HAP-1 (cell line): ENCODE measurements at regions of chr12 and their contacts with region 1.

Region 1: DNA sequence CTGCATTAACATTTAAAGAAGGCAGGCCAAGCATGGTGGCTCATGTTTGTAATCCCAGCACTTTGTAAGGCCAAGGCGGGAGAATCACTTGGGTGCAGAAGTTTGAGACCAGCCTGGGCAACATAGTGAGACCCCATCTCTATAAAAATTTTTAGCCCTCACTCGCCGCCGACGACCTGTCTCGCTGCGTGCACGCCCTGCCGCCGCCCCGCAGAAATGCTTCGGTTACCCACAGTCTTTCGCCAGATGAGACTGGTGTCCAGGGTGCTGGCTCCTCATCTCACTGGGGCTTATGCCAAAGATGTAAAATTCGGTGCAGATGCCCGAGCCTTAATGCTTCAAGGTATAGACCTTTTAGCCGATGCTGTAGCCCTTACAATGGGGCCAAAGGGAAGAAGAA is 10.8 kb upstream of the RBMS2 start:
- DNase-seq: no peak
- H3K4me3 ChIP-seq: no peak overlapping the region
- H3K4me1 ChIP-seq: no peaks in the 10 kb centered on the region
- H3K27me3 ChIP-seq: no peaks in the 10 kb centered on the region

Region 2: DNA sequence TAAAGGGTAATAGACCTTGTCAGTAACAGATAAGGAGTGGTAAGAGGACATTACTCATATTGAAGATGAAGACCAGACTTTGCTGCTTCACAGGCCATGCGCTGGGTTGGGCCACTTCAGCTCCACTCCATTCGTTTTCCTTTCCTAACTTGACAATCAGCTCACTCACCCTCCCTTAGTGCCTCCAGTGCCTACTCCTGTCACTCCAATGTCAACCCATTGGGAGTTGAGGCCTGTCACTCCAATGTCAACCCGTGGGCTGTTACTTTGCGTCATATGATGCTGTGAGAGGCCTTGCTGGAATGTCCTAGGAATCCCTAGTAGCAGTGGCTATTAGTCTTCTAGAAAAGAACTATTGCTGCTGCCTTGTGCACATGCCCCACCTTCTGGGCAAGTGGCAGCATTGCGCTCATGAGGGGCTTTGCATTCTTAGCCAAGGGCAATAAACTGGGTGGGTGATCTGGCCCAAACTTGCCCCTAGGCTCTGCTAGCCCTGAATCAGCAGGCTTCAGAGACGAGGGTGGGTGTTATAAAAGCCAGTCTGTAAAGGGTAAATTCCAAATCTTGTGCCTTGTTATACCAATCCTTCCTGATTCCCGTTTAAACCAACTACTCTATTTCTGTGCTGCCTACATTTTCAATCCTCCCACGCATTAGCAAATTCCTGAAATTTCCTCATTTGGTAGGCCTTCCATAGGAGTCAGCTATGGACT is 83.3 kb after region 1 on chr12:
- in situ Hi-C with region 1: loop called (anchors 5 kb)
- DNase-seq: peak; percentile 62 to 78
- H3K4me3 ChIP-seq: no peak overlapping the region
- H3K4me1 ChIP-seq: no peaks in the 10 kb centered on the region
- H3K27me3 ChIP-seq: no peaks in the 10 kb centered on the region